Calu3 (cell line): ENCODE measurements at regions of chr1 and their contacts with region 1.

Region 1: GRCh38 chr1:19661721-19662228 is 2.9 kb upstream of the HTR6 start:
- DNase-seq: no peak
- H3K4me3 Mint-ChIP-seq: no peak overlapping the region
- H3K27ac Mint-ChIP-seq: no peak overlapping the region
- H3K4me1 Mint-ChIP-seq: peaks cover 8% of the 10 kb centered on the region
- H3K27me3 Mint-ChIP-seq: peaks cover 40% of the 10 kb centered on the region
- CTCF ChIP-seq: peak; percentile 55

Region 2: GRCh38 chr1:19704247-19705113 is 42.7 kb after region 1 on chr1:
- CTCF ChIA-PET with region 1: interaction called, 10 read pairs
- intact Hi-C with region 1: no loop called
- DNase-seq: peak; percentile 72
- H3K4me3 Mint-ChIP-seq: no peak overlapping the region
- H3K27ac Mint-ChIP-seq: no peak overlapping the region
- H3K4me1 Mint-ChIP-seq: no peaks in the 10 kb centered on the region
- H3K27me3 Mint-ChIP-seq: no peaks in the 10 kb centered on the region
- CTCF ChIP-seq: peak; percentile 77